Mammary epithelial cell (primary cell): ENCODE measurements at regions of chr4 and their contacts with region 1.

Region 1: DNA sequence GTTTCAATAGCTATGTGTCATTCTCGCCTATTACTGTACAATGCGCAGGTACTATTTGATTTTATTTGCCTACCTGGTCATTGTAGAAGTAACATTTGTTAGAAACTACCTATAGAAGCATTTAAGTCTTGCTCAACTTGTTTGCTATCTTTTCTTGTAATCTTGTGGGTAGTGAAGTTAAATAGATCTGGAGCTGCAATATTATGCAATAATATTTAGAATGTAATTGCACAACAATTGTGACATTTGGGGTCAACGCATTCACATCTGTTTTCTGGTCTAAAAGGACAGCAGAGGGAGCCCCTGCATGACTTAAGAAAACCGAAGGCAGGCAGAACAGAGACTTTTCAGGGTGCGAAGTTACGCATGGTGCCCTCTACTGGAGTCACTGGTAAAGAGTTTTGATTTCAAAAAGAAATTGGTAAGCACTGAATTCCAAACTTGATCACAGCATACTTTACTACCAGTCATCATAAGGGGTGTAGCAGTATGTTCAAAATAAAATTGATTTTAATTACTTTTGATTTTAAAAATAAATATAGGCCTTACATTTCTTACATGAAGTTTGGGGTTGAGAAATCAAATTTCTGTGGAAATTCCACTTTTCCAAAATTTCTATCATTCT is 503.2 kb upstream of the FAM241A start:
- DNase-seq: peak; percentile 68
- H3K4me3 ChIP-seq: no peak overlapping the region
- H3K27ac ChIP-seq: no peak overlapping the region
- H3K4me1 ChIP-seq: no peaks in the 10 kb centered on the region
- H3K27me3 ChIP-seq: no peaks in the 10 kb centered on the region
- CTCF ChIP-seq: peak; percentile 91 to 92

Region 2: GRCh38 chr4:111136438-111136837 is 505.6 kb before region 1 on chr4:
- CTCF ChIA-PET with region 1: no interaction called
- dilution Hi-C with region 1: no loop called
- in situ Hi-C with region 1: loop called (anchors 25 kb)
- intact Hi-C with region 1: no loop called
- DNase-seq: no peak
- H3K4me3 ChIP-seq: no peak overlapping the region
- H3K27ac ChIP-seq: no peak overlapping the region
- H3K4me1 ChIP-seq: no peaks in the 10 kb centered on the region
- H3K27me3 ChIP-seq: no peaks in the 10 kb centered on the region
- CTCF ChIP-seq: peak in 1 of 2 donors; percentile 38

Region 3: GRCh38 chr4:111494971-111495370 is 147.1 kb before region 1 on chr4:
- CTCF ChIA-PET with region 1: no interaction called
- dilution Hi-C with region 1: no loop called
- in situ Hi-C with region 1: no loop called
- intact Hi-C with region 1: no loop called
- DNase-seq: no peak
- H3K4me3 ChIP-seq: no peak overlapping the region
- H3K27ac ChIP-seq: no peak overlapping the region
- H3K4me1 ChIP-seq: no peaks in the 10 kb centered on the region
- H3K27me3 ChIP-seq: no peaks in the 10 kb centered on the region
- CTCF ChIP-seq: no peak

Region 4: GRCh38 chr4:111689214-111689613 is 47.1 kb after region 1 on chr4:
- CTCF ChIA-PET with region 1: no interaction called
- dilution Hi-C with region 1: no loop called
- in situ Hi-C with region 1: no loop called
- intact Hi-C with region 1: no loop called
- DNase-seq: no peak
- H3K4me3 ChIP-seq: no peak overlapping the region
- H3K27ac ChIP-seq: no peak overlapping the region
- H3K4me1 ChIP-seq: no peaks in the 10 kb centered on the region
- H3K27me3 ChIP-seq: peaks cover 4% of the 10 kb centered on the region
- CTCF ChIP-seq: no peak

Region 5: DNA sequence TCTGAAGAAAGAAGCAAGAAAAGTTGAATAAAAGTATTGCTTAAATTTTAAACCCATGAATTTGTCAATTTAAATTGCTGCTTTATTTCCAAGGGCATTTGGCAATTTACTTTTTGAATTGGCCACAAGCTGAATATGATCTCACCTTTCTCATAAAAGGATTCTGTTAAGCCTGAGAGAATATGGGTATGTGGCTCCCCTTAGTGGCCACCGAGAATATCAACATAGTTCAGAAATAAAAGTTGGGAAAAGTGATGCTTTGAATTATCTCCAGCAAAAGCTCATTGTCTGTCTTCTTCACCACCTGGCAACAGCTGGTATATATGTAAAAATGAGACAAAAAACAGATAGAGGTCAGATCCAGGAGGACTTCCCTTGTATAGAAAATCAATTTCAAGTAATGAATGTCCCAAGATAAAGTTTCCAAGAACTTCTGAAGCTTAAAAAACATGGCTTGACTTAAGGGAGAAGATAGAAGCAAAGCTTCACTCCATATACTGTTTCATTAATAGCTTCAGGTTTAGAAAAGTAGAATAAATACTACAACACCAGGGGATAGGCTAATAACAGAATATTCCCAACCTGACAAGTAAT is 212.5 kb after region 1 on chr4:
- CTCF ChIA-PET with region 1: interaction called, 7 read pairs
- dilution Hi-C with region 1: no loop called
- in situ Hi-C with region 1: loop called (anchors 10 kb)
- intact Hi-C with region 1: loop called (anchors 1 kb)
- DNase-seq: peak; percentile 16
- H3K4me3 ChIP-seq: no peak overlapping the region
- H3K27ac ChIP-seq: no peak overlapping the region
- H3K4me1 ChIP-seq: no peaks in the 10 kb centered on the region
- H3K27me3 ChIP-seq: peaks cover 3% of the 10 kb centered on the region
- CTCF ChIP-seq: peak; percentile 66 to 68

Region 6: DNA sequence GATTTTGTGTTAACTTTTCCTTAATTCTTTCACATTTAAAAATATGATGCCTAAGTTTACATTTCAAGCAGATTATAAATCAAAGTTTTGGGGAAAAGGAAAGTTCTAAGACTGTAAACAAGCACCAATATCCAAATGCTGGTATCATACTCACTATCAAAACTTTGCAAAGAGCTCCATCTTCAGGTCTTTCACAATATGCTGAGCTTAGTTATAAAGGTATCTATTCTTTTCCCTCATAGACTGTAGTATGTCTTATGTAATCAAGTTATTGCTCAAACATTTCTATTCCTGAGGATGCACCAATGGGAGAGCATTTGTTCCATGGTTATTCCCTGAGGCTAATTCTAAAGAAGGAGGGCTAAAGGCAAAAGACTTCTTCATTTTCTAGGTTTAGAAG is 295.3 kb after region 1 on chr4:
- CTCF ChIA-PET with region 1: interaction called, 6 read pairs
- dilution Hi-C with region 1: no loop called
- in situ Hi-C with region 1: loop called in 1 of 2 experiments (anchors 10 kb)
- intact Hi-C with region 1: loop called (anchors 1 kb)
- DNase-seq: peak; percentile 63
- H3K4me3 ChIP-seq: no peak overlapping the region
- H3K27ac ChIP-seq: no peak overlapping the region
- H3K4me1 ChIP-seq: no peaks in the 10 kb centered on the region
- H3K27me3 ChIP-seq: peaks cover 4% of the 10 kb centered on the region
- CTCF ChIP-seq: peak; percentile 53 to 56

Region 7: DNA sequence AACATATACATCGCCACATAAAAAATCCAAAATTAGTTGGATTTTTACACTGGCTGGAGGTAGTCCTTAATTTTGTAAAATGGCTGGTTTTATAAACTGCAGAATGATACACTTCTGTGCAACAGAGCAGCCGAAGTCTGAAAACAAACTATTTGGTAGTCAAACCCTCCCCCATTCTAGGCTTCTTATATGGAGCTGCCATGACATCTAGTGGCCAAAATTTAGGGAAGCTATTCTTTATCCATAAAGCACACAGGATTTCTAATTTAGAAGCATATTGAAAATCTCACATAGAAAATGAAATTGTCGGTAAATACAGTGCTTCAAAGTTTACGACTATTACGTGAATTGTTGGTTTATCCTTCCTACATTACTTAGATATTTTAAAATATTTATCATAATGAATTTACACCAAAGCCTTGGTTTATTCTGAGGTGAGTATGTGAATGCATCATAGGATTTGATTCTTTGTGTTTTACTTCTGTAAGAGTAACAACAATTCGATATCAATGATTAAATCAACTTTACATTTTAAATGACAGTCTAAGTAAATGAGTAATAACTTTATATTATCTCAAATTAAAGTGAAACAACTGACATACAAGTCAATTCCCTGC is 389.8 kb after region 1 on chr4:
- CTCF ChIA-PET with region 1: no interaction called
- dilution Hi-C with region 1: no loop called
- in situ Hi-C with region 1: loop called (anchors 10 to 25 kb)
- intact Hi-C with region 1: loop called (anchors 1 kb)
- DNase-seq: peak; percentile 31
- H3K4me3 ChIP-seq: no peak overlapping the region
- H3K27ac ChIP-seq: no peak overlapping the region
- H3K4me1 ChIP-seq: peaks cover 2% of the 10 kb centered on the region
- H3K27me3 ChIP-seq: peaks cover 8% of the 10 kb centered on the region
- CTCF ChIP-seq: peak; percentile 61 to 75

Region 8: GRCh38 chr4:112060212-112060611 is 418.1 kb after region 1 on chr4:
- CTCF ChIA-PET with region 1: no interaction called
- dilution Hi-C with region 1: no loop called
- in situ Hi-C with region 1: no loop called
- intact Hi-C with region 1: loop called (anchors 10 kb)
- DNase-seq: no peak
- H3K4me3 ChIP-seq: no peak overlapping the region
- H3K27ac ChIP-seq: no peak overlapping the region
- H3K4me1 ChIP-seq: no peaks in the 10 kb centered on the region
- H3K27me3 ChIP-seq: no peaks in the 10 kb centered on the region
- CTCF ChIP-seq: peak; percentile 70